ENCODE measurements at regions of chr5 and their contacts with region 1.

Region 1: DNA sequence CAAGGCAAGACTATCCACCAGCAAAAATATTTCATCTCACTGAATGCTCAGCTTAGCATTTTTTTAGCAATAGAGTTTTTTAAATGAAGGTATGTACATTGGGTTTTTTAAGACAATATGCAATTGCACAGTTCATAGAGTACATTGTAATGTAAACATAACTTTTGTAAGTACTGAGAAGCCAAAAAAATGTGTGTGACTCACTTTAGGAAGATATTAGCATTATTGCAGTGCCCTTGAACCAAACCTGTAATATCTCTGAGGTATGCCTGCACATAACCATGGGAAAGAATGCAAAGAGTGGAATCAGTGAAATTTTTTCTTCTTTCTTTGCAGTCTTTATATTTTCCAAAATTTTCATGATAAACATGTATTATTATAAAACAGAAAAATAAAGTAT is 1533.3 kb upstream of the WWC1 start:
- DNase-seq: no peak
- ATAC-seq: no peak
- H3K4me3 ChIP-seq: no peak overlapping the region
- H3K27ac ChIP-seq: no peak overlapping the region
- H3K4me1 ChIP-seq: no peaks in the 10 kb centered on the region
- H3K27me3 ChIP-seq: no peaks in the 10 kb centered on the region
- CTCF ChIP-seq: no peak
- EP300 ChIP-seq: no peak
- POLR2A ChIP-seq: no peak
- RAD21 ChIP-seq: no peak

Region 2: DNA sequence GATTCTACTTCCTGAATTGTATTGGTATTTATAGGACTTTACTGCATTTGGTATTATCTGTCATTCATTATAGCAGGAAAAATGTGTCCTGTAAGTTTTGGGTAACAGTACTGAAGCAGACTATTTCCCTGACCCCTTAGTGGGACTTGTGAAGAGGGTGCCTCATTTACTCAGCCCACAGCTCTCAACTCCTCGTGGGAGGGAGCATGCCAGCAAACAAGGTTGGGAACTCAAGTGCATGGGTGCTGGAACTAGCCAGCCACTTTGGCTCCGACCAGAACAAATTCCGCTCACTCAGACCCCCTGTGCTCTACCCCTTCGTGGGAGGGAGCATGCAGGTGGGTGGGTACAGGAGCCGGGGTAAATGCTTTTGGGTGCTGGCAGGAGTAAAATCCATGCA is 240.2 kb before region 1 on chr5:
- CTCF ChIA-PET with region 1: no interaction called
- POLR2A ChIA-PET with region 1: no interaction called
- RAD21 ChIA-PET with region 1: no interaction called
- SMC1A ChIA-PET with region 1: no interaction called
- in situ Hi-C with region 1: no loop called
- intact Hi-C with region 1: loop called (anchors 10 kb)
- DNase-seq: no peak
- ATAC-seq: no peak
- H3K4me3 ChIP-seq: no peak overlapping the region
- H3K27ac ChIP-seq: no peak overlapping the region
- H3K4me1 ChIP-seq: no peaks in the 10 kb centered on the region
- H3K27me3 ChIP-seq: no peaks in the 10 kb centered on the region
- CTCF ChIP-seq: no peak
- EP300 ChIP-seq: no peak
- POLR2A ChIP-seq: no peak
- RAD21 ChIP-seq: no peak